CD4-positive, alpha-beta memory T cell (primary cell): ENCODE measurements at regions of chr15 and their contacts with region 1.

Region 1: GRCh38 chr15:59688841-59689625 is at the start of gene BNIP2:
- DNase-seq: peak; percentile 99 to 100 (median 99)
- H3K4me3 ChIP-seq: peak within 1 kb of the TSS; percentile 94 to 100
- H3K4me3 Mint-ChIP-seq: peak within 1 kb of the TSS; percentile 88 to 99 (median 94)
- H3K27ac ChIP-seq: peak within 1 kb of the TSS; percentile 100
- H3K27ac Mint-ChIP-seq: peak within 1 kb of the TSS; percentile 89 to 99 (median 99)
- H3K4me1 ChIP-seq: peaks cover 46% of the 10 kb centered on the region
- H3K4me1 Mint-ChIP-seq: peaks cover 29 to 61% (median 40%) of the 10 kb centered on the region in 4 donors
- H3K27me3 ChIP-seq: no peaks in the 10 kb centered on the region
- H3K27me3 Mint-ChIP-seq: no peaks in the 10 kb centered on the region
- total RNA-seq, gene BNIP2: 86.9 to 87.9 TPM

Region 2: GRCh38 chr15:58749532-58750337 is 939.3 kb before region 1 on chr15 and contains the start of gene ADAM10:
- CTCF ChIA-PET with region 1: no interaction called
- POLR2A ChIA-PET with region 1: no interaction called
- intact Hi-C with region 1: loop called (anchors 2 kb)
- DNase-seq: peak; percentile 93 to 98 (median 94)
- H3K4me3 ChIP-seq: peak within 1 kb of the TSS; percentile 68 to 96
- H3K4me3 Mint-ChIP-seq: peak within 1 kb of the TSS; percentile 96 to 99 (median 97)
- H3K27ac ChIP-seq: peak within 1 kb of the TSS; percentile 79
- H3K27ac Mint-ChIP-seq: peak within 1 kb of the TSS; percentile 94 to 96 (median 95)
- H3K4me1 ChIP-seq: peaks cover 46% of the 10 kb centered on the region
- H3K4me1 Mint-ChIP-seq: peaks cover 26 to 49% (median 36%) of the 10 kb centered on the region in 4 donors
- H3K27me3 ChIP-seq: no peaks in the 10 kb centered on the region
- H3K27me3 Mint-ChIP-seq: no peaks in the 10 kb centered on the region
- total RNA-seq, gene ADAM10: 135 TPM

Region 3: GRCh38 chr15:59725172-59725486 is 36.1 kb after region 1 on chr15:
- CTCF ChIA-PET with region 1: interaction called, 18 read pairs
- POLR2A ChIA-PET with region 1: no interaction called
- intact Hi-C with region 1: no loop called
- DNase-seq: no peak
- H3K4me3 ChIP-seq: no peak overlapping the region
- H3K4me3 Mint-ChIP-seq: no peak overlapping the region
- H3K27ac ChIP-seq: no peak overlapping the region
- H3K27ac Mint-ChIP-seq: no peak overlapping the region
- H3K4me1 ChIP-seq: peaks cover 3% of the 10 kb centered on the region
- H3K4me1 Mint-ChIP-seq: peaks cover 0 to 2% (median 0%) of the 10 kb centered on the region in 4 donors
- H3K27me3 ChIP-seq: peaks cover 4% of the 10 kb centered on the region
- H3K27me3 Mint-ChIP-seq: peaks cover 8 to 17% of the 10 kb centered on the region in 2 donors

Region 4: DNA sequence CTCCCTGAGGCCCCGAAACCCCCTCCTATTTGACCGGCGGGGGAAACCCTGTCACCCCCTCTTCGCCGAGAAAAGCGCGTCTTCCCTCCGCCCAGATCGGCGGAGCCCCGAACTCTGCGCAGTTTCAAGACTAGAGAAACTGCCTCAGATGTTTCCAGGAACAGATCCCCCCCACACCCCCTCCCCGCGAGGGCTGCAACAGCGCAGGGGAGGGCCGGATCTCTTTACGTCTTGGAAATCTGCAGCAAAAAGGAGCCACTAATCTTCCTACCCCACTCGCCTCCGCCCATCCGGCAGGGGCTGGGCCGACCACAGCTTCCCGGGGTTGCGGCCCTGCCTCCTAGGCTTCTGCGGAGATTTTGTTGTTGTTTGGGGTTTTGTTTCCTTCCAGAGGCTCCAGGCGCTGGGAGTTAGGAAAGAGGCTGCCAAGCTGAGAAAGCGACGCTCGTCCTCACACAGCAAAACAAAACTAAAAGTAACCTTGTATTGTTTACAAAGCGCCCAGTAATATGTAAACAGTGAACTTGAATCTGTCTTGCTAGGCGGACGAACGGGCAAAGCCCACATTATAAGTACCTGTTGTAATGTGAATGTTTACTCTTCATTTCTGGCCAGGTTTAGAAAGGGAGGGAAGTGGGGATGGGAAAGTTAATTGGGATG is 317.3 kb after region 1 on chr15:
- CTCF ChIA-PET with region 1: no interaction called
- POLR2A ChIA-PET with region 1: no interaction called
- intact Hi-C with region 1: loop called (anchors 5 kb)
- DNase-seq: peak; percentile 62 to 77 (median 76)
- H3K4me3 ChIP-seq: peak overlapping the region; percentile 45 to 66
- H3K4me3 Mint-ChIP-seq: peak overlapping the region; percentile 86 to 95 (median 89)
- H3K27ac ChIP-seq: no peak overlapping the region
- H3K27ac Mint-ChIP-seq: peak overlapping the region; percentile 4 to 96 (median 82)
- H3K4me1 ChIP-seq: peaks cover 40% of the 10 kb centered on the region
- H3K4me1 Mint-ChIP-seq: peaks cover 22 to 50% (median 27%) of the 10 kb centered on the region in 4 donors
- H3K27me3 ChIP-seq: peaks cover 85% of the 10 kb centered on the region
- H3K27me3 Mint-ChIP-seq: peaks cover 73 to 77% of the 10 kb centered on the region in 2 donors

Region 5: GRCh38 chr15:60326824-60327654 is 638.0 kb after region 1 on chr15:
- CTCF ChIA-PET with region 1: interaction called, 20 read pairs
- POLR2A ChIA-PET with region 1: no interaction called
- intact Hi-C with region 1: loop called (anchors 1 kb)
- DNase-seq: peak in 4 of 5 donors; percentile 55 to 58 (median 57)
- H3K4me3 ChIP-seq: no peak overlapping the region
- H3K4me3 Mint-ChIP-seq: no peak overlapping the region
- H3K27ac ChIP-seq: no peak overlapping the region
- H3K27ac Mint-ChIP-seq: no peak overlapping the region
- H3K4me1 ChIP-seq: no peaks in the 10 kb centered on the region
- H3K4me1 Mint-ChIP-seq: peaks cover 2 to 7% (median 6%) of the 10 kb centered on the region in 4 donors
- H3K27me3 ChIP-seq: peaks cover 23% of the 10 kb centered on the region
- H3K27me3 Mint-ChIP-seq: peaks cover 18 to 27% of the 10 kb centered on the region in 2 donors

Region 6: DNA sequence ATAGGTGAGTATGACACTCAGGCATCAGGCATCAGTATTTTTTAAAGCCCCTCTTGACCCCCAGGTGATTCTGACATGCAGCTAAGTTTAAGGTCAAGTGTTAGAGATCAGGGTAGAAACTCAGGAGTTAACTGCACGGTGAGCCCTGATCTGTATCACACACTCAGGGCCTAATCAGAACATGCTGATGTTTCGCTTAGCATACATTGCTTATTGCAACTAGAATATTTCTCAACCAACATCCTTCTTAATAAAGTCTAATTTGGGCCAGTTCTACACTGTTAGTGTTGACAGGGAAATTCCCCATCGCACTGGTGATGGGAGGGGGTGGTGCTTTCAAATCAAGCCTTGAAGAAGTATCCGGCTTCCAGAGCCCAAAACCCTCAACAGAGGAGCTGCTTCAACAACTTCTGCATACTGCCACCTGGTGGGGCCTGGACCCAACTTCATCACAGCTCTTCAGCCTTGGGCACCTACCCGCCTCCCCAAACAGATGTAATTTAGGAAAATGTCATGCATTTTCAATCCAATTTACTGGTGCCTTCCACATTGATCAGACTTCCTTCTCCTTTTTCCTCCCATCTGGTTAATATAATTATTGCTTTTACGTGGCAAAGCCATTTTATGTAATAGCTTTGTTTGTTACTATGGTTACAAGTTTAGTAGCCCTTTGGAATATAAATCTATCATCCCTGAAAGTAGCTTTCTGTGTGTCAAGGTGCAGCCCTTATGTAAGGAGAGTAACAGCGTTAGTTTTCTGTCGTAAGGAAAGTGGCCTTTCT is 1227.8 kb after region 1 on chr15:
- CTCF ChIA-PET with region 1: no interaction called
- POLR2A ChIA-PET with region 1: no interaction called
- intact Hi-C with region 1: loop called (anchors 1 kb)
- DNase-seq: peak; percentile 85 to 95 (median 88)
- H3K4me3 ChIP-seq: no peak overlapping the region
- H3K4me3 Mint-ChIP-seq: peak overlapping the region in 5 of 8 donors; percentile 18 to 72 (median 57)
- H3K27ac ChIP-seq: peak overlapping the region; percentile 55
- H3K27ac Mint-ChIP-seq: peak overlapping the region; percentile 82 to 98 (median 94)
- H3K4me1 ChIP-seq: peaks cover 12% of the 10 kb centered on the region
- H3K4me1 Mint-ChIP-seq: peaks cover 7 to 17% (median 10%) of the 10 kb centered on the region in 4 donors
- H3K27me3 ChIP-seq: no peaks in the 10 kb centered on the region
- H3K27me3 Mint-ChIP-seq: no peaks in the 10 kb centered on the region